ENCODE measurements at regions of chr17 and their contacts with region 1.

Region 1: DNA sequence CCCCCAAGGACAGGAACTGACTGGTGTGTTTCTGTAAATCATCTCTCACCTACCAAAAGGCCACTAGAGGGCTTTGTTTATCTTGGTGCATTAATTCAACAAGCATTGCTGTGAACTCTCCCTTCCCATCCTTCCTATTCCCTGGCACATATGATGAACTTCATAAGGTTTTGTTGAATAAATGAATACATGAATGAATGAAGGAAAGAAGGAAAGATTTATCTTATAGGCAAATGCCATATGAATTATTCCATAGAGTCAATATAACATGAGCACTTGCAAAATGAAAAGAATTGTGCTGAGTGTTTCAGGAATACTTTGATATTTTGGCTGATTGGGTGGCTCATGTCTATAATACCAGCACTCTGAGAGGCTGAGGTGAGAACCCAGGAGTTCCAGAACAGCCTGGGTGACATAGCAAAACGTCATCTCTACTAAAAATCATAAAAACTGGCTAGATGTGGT is 4.3 kb downstream of the SPDYE4 start:
- DNase-seq: no peak
- H3K4me3 ChIP-seq: no peak overlapping the region
- H3K27ac ChIP-seq: no peak overlapping the region
- H3K4me1 ChIP-seq: no peaks in the 10 kb centered on the region
- H3K27me3 ChIP-seq: no peaks in the 10 kb centered on the region
- CTCF ChIP-seq: peak in 1 of 6 experiments; percentile 28
- POLR2A ChIP-seq: no peak

Region 2: DNA sequence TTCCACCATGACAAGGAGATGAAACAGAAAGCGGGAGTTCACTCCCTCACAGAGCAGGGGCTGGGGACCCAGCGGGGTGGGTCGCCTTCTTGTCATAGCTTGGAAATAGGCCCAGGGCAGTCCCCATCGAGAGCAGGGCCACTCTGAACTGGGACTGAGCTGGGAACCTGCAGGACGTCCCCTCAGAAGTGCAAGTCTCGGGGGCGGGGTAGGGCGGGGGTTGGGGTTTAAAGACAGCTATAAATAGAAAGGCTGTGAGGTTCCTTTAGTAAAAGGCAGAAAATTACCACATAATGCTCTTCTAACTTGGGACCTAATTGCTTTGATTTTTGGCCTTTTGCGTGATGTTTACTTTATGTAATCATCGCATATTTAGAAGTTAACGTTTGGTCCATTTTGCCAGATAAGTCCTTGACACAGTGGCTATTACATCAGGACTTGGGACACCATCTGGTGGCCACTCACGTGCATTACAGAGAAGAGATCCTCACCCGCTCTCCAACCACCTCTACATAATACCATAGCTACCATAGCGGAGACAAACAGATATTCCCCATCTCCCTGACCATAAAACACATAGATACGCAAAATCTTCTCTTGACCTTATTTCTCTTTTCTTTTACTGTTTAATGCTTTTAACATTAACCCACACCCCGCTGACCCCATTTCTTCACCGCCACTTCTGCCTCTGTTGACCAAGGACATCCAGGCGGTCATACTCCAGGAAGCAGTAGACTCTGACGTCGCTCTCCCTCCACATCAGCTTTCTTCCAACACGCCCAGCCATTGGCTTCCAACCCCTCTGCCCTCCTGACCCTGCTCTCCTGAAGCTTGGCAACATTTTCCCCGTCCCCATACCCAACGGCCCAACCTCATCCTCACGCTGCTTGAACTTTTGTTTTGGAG is 140.9 kb after region 1 on chr17:
- intact Hi-C with region 1: loop called (anchors 5 kb)
- DNase-seq: peak; percentile 64 to 66
- H3K4me3 ChIP-seq: no peak overlapping the region
- H3K27ac ChIP-seq: no peak overlapping the region
- H3K4me1 ChIP-seq: no peaks in the 10 kb centered on the region
- H3K27me3 ChIP-seq: no peaks in the 10 kb centered on the region
- CTCF ChIP-seq: peak; percentile 55 to 83 (median 68)
- POLR2A ChIP-seq: no peak